ENCODE measurements at regions of chr2 and their contacts with region 1.

Region 1: DNA sequence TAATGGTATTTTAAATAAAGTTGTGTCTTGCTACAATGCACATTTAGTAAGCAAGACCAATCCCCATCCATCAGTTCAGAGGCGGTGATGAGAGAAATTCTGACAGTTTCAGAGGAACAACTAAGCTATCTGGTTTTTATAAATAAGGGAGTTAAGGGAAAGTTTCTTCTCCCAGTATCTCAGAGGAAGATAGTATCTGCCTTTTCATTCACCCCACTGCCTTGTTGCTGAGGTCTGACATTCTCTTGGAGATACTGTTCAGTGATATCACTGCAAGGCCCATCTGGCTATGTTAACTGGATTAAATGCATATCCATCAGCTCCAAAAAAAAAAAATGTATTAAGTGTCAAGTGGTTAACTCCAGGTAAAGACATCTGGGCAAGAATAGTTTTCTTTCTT is 47.9 kb downstream of the RBMS1 start:
- DNase-seq: no peak
- H3K4me3 ChIP-seq: no peak overlapping the region
- H3K27me3 ChIP-seq: no peaks in the 10 kb centered on the region
- CTCF ChIP-seq: no peak

Region 2: GRCh38 chr2:160402997-160403979 is 42.4 kb before region 1 on chr2:
- CTCF ChIA-PET with region 1: no interaction called
- POLR2A ChIA-PET with region 1: no interaction called
- DNase-seq: no peak
- H3K4me3 ChIP-seq: no peak overlapping the region
- H3K27me3 ChIP-seq: no peaks in the 10 kb centered on the region
- CTCF ChIP-seq: no peak

Region 3: DNA sequence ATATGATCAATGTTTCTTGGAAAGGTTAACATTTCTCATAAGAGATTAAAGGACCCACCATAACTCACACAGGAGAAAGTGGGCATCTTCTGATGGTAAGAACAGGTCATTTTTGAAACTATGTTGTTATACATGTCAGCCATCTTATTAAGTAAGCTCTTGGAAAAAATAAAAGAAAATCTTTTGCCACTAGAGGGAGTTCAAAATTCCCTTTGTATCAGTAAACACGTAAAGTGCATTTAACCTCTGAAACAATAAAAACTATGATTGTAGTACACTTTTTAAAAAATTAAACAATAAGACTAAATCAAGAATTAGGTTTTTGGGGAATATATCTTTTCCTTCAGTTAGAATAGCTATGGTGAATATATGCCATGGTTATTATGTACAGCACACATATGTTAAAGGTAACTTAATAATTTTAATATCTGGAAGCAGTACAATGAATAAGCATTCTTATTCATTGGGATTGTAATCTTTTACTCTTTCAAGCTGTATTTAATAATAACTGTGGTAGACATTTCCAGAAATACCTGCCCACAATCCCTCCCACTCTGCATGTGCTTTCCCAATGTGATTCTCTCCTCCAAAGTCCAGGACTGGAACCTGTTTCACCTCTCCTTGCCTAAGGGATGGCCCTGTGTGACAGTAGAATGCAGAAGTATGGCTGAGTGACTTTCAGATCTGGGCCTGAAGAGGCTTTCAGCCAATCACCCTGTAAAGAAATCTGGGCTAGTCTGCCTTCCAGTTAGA is 16.2 kb before region 1 on chr2:
- CTCF ChIA-PET with region 1: interaction called, 10 read pairs
- POLR2A ChIA-PET with region 1: no interaction called
- DNase-seq: no peak
- H3K4me3 ChIP-seq: no peak overlapping the region
- H3K27me3 ChIP-seq: no peaks in the 10 kb centered on the region
- CTCF ChIP-seq: peak; percentile 43

Region 4: DNA sequence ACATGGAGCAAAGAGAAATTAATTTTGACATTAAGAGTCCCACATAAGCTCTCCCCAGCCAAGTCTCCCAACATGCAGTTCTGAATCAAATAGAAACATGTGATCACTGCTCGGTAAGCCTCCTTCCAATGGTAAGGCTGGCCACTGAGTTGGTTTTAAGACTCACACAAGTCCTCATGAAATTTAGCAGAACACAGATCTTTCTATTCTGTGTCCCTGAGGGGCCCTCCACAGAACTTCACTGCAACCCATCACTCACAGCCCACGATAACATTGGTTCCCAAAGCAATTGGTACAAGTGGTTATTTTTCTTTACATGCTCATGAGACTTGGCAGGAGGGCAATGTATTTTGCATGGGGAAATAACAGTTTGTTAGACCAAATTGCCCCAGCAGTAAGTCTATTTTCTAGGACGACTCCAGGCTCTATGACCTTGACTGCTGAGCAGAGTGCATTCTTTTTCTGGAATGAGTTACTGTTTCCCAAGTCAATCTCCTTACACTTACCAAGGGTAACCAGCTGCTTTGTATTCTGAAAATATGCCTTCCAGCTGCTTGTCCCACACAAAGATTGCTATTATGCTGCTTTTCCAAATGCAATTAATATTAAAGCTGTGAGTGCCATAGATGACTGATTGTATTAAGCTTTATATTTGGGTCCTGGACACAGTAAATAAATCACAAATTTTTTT is 572.3 kb after region 1 on chr2:
- CTCF ChIA-PET with region 1: no interaction called
- POLR2A ChIA-PET with region 1: no interaction called
- DNase-seq: no peak
- H3K4me3 ChIP-seq: no peak overlapping the region
- H3K27me3 ChIP-seq: no peaks in the 10 kb centered on the region
- CTCF ChIP-seq: no peak

Measured in BJ (cell line).